Panc1 (cell line): ENCODE measurements at regions of chr12 and their contacts with region 1.

Region 1: GRCh38 chr12:14629832-14630710 is 62.4 kb upstream of the PLBD1 start:
- DNase-seq: peak; percentile 77
- ATAC-seq: peak; percentile 97
- H3K4me3 ChIP-seq: no peak overlapping the region
- H3K27ac ChIP-seq: no peak overlapping the region
- H3K4me1 ChIP-seq: no peaks in the 10 kb centered on the region
- H3K27me3 ChIP-seq: no peaks in the 10 kb centered on the region
- CTCF ChIP-seq: peak; percentile 96

Region 2: DNA sequence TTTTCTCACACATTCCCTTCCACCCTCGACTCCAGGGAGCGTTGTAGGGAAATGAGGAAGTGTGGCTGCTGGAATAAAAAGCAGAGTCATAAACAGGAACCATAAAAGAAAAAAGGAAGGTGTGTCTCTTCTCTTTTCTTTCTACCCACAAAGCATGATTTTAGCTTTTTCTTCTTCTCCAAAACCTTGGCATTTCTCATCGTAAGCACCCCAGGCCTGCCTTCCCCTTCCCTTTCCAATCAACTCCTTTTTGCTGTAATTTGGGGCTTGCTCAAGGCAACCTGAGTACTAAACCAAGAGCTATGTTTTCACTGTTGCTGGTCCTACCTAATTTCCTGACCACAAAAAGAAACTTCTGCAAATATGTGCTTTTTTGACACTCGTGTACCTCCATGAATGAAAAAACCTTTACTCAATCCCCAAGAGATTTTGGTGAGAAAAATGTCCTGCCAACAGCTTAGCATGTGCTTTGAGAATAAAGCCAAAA is 71.6 kb before region 1 on chr12:
- CTCF ChIA-PET with region 1: no interaction called
- POLR2A ChIA-PET with region 1: no interaction called
- in situ Hi-C with region 1: no loop called
- intact Hi-C with region 1: no loop called
- DNase-seq: no peak
- ATAC-seq: no peak
- H3K4me3 ChIP-seq: no peak overlapping the region
- H3K27ac ChIP-seq: no peak overlapping the region
- H3K4me1 ChIP-seq: no peaks in the 10 kb centered on the region
- H3K27me3 ChIP-seq: no peaks in the 10 kb centered on the region
- CTCF ChIP-seq: no peak

Region 3: GRCh38 chr12:14716848-14717444 is 86.9 kb after region 1 on chr12:
- CTCF ChIA-PET with region 1: no interaction called
- POLR2A ChIA-PET with region 1: interaction called, 3 read pairs
- in situ Hi-C with region 1: no loop called
- intact Hi-C with region 1: loop called (anchors 2 kb)
- DNase-seq: no peak
- ATAC-seq: peak; percentile 78; the same call in 1 of the 2 replicates
- H3K4me3 ChIP-seq: no peak overlapping the region
- H3K27ac ChIP-seq: no peak overlapping the region
- H3K4me1 ChIP-seq: no peaks in the 10 kb centered on the region
- H3K27me3 ChIP-seq: no peaks in the 10 kb centered on the region
- CTCF ChIP-seq: peak; percentile 58